AG04449 (cell line): ENCODE measurements at regions of chr11 and their contacts with region 1.

Region 1: GRCh38 chr11:132941024-132941646 is 591.2 kb downstream of the OPCML start:
- DNase-seq: no peak
- H3K4me3 ChIP-seq: no peak overlapping the region
- CTCF ChIP-seq: peak; percentile 65

Region 2: DNA sequence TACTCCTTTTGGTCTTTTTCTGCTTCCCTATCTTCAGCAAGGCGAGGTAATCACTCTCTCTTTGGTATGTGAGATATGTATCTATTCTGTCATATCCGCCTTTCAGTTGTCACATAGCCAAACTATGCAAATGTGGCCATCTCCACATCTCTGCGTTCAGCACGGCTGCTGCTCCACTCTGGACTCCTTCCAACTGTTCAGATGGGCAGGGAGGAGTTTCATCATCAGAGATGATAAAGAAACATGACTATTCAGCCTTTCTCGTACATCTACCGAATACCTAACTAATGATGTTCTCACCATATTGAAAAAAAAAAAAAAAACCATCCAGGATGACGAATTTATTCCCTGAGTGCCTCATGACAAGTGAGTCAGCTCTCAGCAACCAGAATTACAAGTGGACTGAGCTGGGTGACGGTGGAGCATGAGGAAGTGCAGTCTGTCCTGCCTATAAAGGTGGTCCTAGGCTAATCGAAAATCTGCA is 308.5 kb before region 1 on chr11:
- CTCF ChIA-PET with region 1: interaction called, 18 read pairs
- POLR2A ChIA-PET with region 1: no interaction called
- DNase-seq: peak; percentile 99
- H3K4me3 ChIP-seq: no peak overlapping the region
- CTCF ChIP-seq: no peak

Region 3: DNA sequence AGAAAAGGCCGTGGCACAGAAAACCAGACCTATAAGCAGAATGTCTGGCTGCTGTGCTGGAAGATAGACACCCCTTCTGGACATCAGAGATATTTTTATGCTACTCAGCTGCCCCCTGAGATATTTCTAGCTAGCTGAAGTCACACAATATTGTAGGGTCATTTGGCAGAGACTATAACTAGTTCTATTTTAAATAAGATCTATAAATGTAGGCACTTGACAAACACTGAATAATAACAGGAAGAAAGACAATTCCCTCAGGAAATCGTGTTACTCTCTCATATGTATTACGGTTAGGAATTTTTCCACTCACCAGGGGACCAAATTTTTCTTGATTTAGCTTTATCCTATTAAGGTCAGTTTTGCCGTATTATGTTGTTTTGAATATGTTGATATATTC is 254.2 kb before region 1 on chr11:
- CTCF ChIA-PET with region 1: interaction called, 10 read pairs
- POLR2A ChIA-PET with region 1: no interaction called
- DNase-seq: peak; percentile 4
- H3K4me3 ChIP-seq: no peak overlapping the region
- CTCF ChIP-seq: no peak

Region 4: DNA sequence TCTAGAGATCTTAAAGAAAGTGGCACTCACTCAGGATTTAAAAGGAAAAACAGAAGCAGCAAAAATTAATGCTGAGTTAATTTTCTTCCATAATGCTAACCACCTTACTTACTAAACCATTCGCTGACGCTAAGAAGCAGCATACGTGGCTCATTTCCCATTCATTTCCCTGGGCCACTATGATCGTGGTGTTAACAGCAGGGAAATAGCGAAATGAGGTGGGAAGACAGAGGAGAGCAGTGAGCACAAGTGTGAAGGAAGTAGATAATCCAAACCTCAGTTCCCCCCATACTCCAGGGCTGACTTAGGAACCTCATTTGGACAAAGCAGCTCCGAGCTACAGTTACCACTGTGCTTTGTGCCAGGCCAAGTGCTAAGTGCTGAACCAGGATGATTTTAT is 132.1 kb before region 1 on chr11:
- CTCF ChIA-PET with region 1: interaction called, 14 read pairs
- POLR2A ChIA-PET with region 1: no interaction called
- DNase-seq: no peak
- H3K4me3 ChIP-seq: no peak overlapping the region
- CTCF ChIP-seq: no peak

Region 5: GRCh38 chr11:132925825-132926469 is 15.2 kb before region 1 on chr11:
- CTCF ChIA-PET with region 1: interaction called, 52 read pairs
- POLR2A ChIA-PET with region 1: no interaction called
- DNase-seq: no peak
- H3K4me3 ChIP-seq: no peak overlapping the region
- CTCF ChIP-seq: no peak

Region 6: DNA sequence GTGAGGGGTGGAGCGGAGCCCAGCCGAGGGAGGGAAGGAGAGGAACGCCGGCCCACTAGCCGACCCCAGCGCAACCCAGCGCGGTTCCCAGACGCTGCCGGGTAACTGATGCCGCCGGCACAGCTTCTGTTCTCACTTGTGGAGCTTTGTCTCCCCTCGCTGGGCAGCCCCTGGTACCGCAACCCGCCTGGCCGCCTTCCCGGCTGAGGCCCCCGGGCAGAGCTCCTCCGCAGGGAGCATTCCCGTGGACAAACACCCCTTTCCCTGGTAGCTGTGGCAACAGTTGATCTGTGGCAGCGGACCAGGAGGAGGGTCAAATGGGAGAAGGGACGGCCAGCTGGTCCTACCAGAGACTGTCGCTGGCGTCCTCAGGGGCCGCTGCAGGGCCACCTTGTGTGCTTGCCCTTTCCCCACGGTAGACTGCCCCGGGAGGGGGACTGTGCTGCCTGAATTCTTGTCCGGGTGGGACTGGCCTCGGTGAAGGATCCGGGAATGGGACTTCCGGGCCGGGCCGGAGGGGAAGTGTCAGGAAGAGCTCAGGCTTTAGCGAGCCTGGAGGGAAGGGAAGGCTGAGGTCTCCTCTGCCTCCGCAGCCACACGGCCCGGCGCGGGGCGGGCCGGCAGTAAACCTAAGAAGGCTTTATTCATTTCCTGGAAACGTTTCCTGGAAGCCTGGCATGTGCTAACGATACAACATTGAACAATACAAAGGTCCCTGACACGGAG is 123.2 kb after region 1 on chr11:
- CTCF ChIA-PET with region 1: interaction called, 21 read pairs
- POLR2A ChIA-PET with region 1: interaction called, 4 read pairs
- DNase-seq: peak; percentile 23
- H3K4me3 ChIP-seq: peak overlapping the region; percentile 71
- CTCF ChIP-seq: peak; percentile 96